Activated B cell treated with CpG ODN at 0.5 μM for 24 hours (primary cell): ENCODE measurements at regions of chr3 and their contacts with region 1.

Region 1: GRCh38 chr3:48439820-48440589 is at the starts of genes CCDC51 and TMA7:
- DNase-seq: peak; percentile 96
- ATAC-seq: peak; percentile 95
- H3K4me3 Mint-ChIP-seq: peak within 1 kb of the TSS; percentile 98
- H3K27ac Mint-ChIP-seq: peak within 1 kb of the TSS; percentile 95
- H3K4me1 Mint-ChIP-seq: peaks cover 45% of the 10 kb centered on the region
- H3K27me3 Mint-ChIP-seq: no peaks in the 10 kb centered on the region
- CTCF ChIP-seq: no peak
- total RNA-seq, gene CCDC51: 8.7 and 8.8 TPM in 2 replicates
- total RNA-seq, gene TMA7: 216 and 296 TPM in 2 replicates

Region 2: GRCh38 chr3:47513125-47513929 is 926.7 kb before region 1 on chr3 and contains the start of gene ELP6:
- CTCF ChIA-PET with region 1: no interaction called
- POLR2A ChIA-PET with region 1: no interaction called
- intact Hi-C with region 1: loop called (anchors 1 kb)
- DNase-seq: peak; percentile 95
- ATAC-seq: peak; percentile 93
- H3K4me3 Mint-ChIP-seq: peak within 1 kb of the TSS; percentile 98
- H3K27ac Mint-ChIP-seq: peak within 1 kb of the TSS; percentile 99
- H3K4me1 Mint-ChIP-seq: peaks cover 18% of the 10 kb centered on the region
- H3K27me3 Mint-ChIP-seq: no peaks in the 10 kb centered on the region
- CTCF ChIP-seq: no peak
- total RNA-seq, gene ELP6: 37.8 and 45.4 TPM in 2 replicates

Region 3: DNA sequence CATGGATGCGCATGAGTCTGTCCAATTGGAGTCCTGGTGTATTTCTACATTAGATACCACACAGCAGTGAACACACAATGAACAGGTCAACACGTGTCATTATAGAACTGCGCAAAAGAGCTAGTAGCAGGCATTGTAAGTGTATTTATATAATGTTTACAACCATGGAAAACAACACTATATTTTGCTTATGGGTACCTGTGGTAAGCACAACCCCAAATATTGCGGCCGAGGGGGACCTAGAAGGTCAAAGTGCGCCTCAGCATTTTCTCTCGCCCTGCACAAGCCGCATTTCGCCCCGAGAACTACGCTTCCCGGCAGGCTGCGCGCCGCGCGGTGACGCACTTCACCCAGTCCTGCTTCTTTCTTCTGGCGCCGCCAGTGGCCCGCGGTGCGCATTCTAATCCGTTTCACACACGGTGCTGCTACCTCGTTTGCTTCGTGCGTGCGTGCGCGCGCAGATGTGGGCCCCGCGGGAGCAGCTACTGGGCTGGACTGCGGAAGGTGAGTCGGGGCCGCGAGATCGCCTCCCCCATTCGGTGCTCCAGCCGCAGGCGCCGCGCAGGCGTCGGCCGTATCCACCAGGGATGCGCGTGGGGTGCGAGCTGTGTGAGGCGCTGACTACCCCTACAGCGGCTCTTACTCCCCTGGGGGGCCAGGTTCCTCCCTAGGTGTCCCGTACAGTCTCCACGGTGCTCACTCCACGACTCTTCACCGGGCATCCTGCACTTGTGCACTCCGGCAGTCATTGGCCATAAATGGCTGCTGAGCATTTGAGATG is 199.1 kb before region 1 on chr3 and contains the start of gene ZNF589:
- CTCF ChIA-PET with region 1: interaction called, 13 read pairs
- POLR2A ChIA-PET with region 1: interaction called, 11 read pairs
- intact Hi-C with region 1: no loop called
- DNase-seq: peak; percentile 94
- ATAC-seq: peak; percentile 96
- H3K4me3 Mint-ChIP-seq: peak within 1 kb of the TSS; percentile 92
- H3K27ac Mint-ChIP-seq: peak within 1 kb of the TSS; percentile 94
- H3K4me1 Mint-ChIP-seq: peaks cover 17% of the 10 kb centered on the region
- H3K27me3 Mint-ChIP-seq: no peaks in the 10 kb centered on the region
- CTCF ChIP-seq: no peak
- total RNA-seq, gene ZNF589: 12.4 and 19.2 TPM in 2 replicates

Region 4: GRCh38 chr3:48400824-48401433 is 39.1 kb before region 1 on chr3:
- CTCF ChIA-PET with region 1: interaction called, 206 read pairs
- POLR2A ChIA-PET with region 1: interaction called, 10 read pairs
- intact Hi-C with region 1: loop called (anchors 1 kb)
- DNase-seq: peak; percentile 24
- ATAC-seq: peak; percentile 94
- H3K4me3 Mint-ChIP-seq: no peak overlapping the region
- H3K27ac Mint-ChIP-seq: no peak overlapping the region
- H3K4me1 Mint-ChIP-seq: no peaks in the 10 kb centered on the region
- H3K27me3 Mint-ChIP-seq: peaks cover under 1% of the 10 kb centered on the region
- CTCF ChIP-seq: peak; percentile 41

Region 5: DNA sequence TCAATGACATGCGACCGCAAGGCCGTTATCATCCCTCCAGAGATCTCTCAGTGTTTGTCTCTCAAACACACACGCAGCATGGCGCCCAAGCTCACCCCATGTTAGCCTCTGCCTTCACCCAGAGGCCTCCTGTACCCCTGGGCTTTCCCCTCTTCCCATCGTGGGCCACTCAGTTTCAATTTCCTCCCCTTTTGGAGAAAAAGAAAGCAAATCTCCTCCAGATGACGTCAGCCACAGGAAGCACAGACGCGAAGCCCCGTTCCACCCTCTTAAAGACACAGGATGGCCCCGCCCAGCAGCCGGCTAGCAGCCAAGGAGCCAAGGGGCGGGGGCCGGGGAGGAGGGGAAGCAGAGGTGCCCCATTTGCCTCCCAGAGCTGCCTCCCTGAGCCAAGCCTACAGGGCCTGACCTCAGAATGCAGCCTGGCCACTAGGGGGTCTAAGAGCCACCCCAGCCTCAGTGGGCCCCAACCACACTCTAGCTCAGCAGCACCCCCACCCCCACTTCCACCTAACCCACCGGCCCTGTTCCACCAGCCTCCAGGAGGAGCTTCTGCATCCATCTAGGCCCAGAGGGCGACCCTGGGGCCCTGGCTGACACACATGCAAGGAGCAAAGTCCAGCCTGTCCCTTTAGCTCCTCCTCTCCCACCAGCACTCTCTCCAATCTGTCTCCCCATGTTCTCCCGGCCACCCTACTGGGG is 33.1 kb after region 1 on chr3:
- CTCF ChIA-PET with region 1: interaction called, 15 read pairs
- POLR2A ChIA-PET with region 1: interaction called, 29 read pairs
- intact Hi-C with region 1: loop called (anchors 1 kb)
- DNase-seq: peak; percentile 84
- ATAC-seq: peak; percentile 89
- H3K4me3 Mint-ChIP-seq: peak overlapping the region; percentile 89
- H3K27ac Mint-ChIP-seq: peak overlapping the region; percentile 99
- H3K4me1 Mint-ChIP-seq: peaks cover 79% of the 10 kb centered on the region
- H3K27me3 Mint-ChIP-seq: no peaks in the 10 kb centered on the region
- CTCF ChIP-seq: no peak

Region 6: DNA sequence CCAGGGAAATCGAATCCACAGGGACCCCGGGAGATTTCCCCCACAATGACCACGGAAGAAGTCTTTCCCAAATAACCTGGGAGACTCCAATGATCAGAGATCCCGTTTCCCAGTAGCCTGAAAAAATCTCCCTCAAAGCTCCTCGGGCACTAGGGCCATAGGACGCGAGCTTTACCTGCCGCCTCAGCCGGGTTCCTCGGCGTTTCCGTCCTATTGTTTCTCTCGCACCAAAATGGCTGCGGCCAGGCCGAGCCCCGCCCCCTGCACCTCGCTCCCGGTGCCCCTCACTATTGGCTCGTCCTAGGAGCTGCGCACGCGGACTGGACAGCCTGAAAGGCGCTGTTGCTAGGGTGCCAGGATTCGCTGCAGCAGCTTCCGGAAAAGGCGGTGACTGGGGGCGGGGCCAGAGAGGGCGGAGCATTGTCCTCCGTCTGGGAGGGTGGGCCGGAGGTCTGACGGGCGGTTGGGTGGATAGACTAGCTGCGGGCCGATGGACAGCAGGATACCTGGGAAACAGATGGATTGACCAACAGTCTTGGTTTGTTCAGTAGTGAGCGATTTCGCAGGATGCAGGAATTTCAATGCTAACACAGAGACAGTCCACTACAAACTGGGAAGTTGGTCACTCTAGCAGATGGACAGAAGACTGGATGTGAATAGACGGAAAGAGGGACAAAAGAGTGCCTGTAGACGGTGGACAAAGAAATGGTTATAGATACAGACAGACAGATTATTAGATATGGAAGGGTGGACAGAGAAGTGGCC is 277.2 kb after region 1 on chr3 and contains the start of gene IP6K2:
- CTCF ChIA-PET with region 1: interaction called, 3 read pairs
- POLR2A ChIA-PET with region 1: no interaction called
- intact Hi-C with region 1: loop called (anchors 10 kb)
- DNase-seq: peak; percentile 98
- ATAC-seq: peak; percentile 99
- H3K4me3 Mint-ChIP-seq: peak within 1 kb of the TSS; percentile 98
- H3K27ac Mint-ChIP-seq: peak within 1 kb of the TSS; percentile 94
- H3K4me1 Mint-ChIP-seq: peaks cover 37% of the 10 kb centered on the region
- H3K27me3 Mint-ChIP-seq: peaks cover 4% of the 10 kb centered on the region
- CTCF ChIP-seq: no peak
- total RNA-seq, gene IP6K2: 83.2 and 94.1 TPM in 2 replicates